Right ventricle myocardium inferior (tissue), 1 donor: ENCODE measurements at regions of chr16 and their contacts with region 1.

Region 1: DNA sequence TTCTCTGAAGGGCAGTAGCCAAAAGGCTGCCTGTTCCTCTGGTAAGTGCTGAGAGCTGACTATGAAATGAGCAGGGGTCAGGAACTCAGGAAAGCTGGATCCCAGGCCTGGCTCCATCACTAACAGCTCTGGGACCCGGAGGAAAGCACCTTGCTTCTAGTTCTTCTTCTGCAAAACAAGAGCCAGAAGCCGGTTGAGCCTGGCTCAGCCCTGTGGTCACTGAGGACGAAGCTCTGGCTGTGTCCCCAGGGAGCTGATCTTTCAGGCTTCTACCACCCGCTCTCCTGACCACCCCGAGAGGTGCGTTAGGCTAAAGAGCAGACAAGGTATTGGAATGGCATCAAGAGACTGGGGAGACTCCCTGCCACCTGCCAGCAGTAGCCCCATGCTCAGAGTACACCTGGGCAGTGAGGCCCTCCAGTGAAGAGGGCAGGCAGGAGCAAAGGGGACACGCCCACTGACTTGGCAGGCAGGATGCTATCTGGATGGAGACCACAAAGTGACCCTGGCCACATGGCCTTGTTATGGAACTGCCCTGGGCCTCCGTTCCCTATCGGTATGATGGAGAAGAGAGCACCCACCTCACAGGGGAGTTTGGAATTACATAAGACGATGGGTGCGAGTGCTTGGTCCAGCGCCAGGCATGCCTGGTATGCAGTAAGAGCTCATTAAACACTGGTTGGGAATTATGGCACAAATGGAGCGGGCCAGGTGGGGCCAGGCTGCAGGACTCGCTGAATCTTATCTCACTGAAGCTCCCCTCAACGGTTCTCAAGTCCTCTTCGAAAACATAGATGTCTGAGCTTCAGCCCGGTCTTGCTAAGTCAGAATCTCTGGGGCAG is 61.4 kb downstream of the COG7 start:
- DNase-seq: no peak
- ATAC-seq: no peak

Region 2: DNA sequence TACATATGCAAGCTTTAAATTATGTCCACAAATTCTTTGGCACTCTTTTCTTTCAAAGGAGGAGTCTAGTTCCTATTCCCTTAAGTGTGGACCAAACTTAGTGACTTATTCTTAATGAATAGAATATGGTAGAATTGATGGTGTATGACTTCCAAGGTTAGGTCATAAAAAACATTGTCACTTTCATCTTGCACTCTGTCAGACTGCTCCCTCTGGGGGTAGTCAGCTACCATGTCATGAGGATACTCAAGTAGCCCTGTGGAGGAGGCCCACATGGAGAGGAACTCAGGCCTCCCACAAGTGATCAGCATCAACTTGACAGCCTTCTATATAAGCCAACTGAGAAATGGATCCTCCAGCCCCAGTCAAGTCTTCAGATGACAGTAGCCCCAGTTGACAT is 147.5 kb before region 1 on chr16:
- intact Hi-C with region 1: loop called (anchors 5 kb)
- DNase-seq: no peak
- ATAC-seq: no peak